PC-3 (cell line): ENCODE measurements at regions of chr3 and their contacts with region 1.

Region 1: DNA sequence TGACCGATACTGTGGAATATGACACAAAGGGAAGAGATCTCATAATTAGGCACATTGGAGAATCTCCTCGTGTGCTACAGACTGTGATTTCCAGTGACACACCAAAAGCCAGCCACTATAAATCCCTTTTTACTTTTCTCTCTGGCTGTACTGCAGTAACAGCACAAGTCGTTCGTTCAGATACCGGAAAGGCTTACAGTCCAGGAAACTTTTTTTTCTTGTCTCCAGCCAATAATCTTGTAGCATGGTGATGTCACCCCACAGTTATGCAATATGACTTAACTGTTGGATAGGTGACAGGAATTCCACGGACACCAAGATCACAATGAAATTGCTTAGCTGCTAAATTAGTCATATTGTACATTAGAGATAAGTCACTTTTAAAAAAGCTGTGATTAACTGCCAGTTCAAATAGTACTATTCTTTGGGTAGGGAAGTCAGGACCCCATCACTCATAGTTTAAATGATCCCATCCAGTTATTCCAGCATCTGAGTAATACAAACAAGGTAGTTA is 36.3 kb upstream of the TSC22D2 start:
- DNase-seq: peak; percentile 100
- ATAC-seq: peak; percentile 69
- H3K4me3 ChIP-seq: peak overlapping the region; percentile 63
- H3K27ac ChIP-seq: peak overlapping the region; percentile 84
- H3K4me1 ChIP-seq: peaks cover 49% of the 10 kb centered on the region
- H3K27me3 ChIP-seq: no peaks in the 10 kb centered on the region
- CTCF ChIP-seq: no peak

Region 2: DNA sequence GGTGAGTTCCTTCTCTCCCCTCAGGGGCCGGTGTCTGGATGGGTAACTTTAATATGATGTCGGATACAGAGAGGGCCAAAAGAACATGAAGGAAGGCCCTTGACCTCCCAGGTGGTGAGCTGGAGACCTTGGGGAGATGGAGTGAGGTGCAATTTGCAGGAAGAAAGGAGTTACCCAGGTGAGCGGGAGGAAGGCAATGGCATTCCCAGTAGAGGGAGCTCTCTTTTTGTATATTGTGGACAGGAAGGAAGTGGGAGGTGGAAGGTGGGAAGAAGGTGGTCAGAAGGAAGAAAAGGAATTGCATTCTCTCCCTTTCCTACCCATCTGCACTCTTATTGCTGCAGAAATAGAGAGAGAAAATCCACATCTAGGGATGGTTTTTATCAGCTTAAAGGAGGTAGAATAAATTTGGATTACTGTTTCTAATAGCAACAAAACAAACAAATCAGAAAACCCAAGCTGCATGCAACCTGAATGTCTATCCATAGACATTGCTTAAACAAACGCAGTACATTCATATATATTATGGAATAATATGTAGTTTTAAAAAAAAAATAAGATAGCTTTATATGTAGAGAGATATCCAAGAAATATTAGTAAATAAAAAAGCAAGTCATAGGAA is 132.7 kb before region 1 on chr3:
- CTCF ChIA-PET with region 1: no interaction called
- POLR2A ChIA-PET with region 1: no interaction called
- intact Hi-C with region 1: loop called (anchors 5 kb)
- DNase-seq: peak; percentile 77
- ATAC-seq: peak; percentile 40
- H3K4me3 ChIP-seq: peak overlapping the region; percentile 61
- H3K27ac ChIP-seq: peak overlapping the region; percentile 95
- H3K4me1 ChIP-seq: peaks cover 46% of the 10 kb centered on the region
- H3K27me3 ChIP-seq: no peaks in the 10 kb centered on the region
- CTCF ChIP-seq: peak; percentile 96

Region 3: DNA sequence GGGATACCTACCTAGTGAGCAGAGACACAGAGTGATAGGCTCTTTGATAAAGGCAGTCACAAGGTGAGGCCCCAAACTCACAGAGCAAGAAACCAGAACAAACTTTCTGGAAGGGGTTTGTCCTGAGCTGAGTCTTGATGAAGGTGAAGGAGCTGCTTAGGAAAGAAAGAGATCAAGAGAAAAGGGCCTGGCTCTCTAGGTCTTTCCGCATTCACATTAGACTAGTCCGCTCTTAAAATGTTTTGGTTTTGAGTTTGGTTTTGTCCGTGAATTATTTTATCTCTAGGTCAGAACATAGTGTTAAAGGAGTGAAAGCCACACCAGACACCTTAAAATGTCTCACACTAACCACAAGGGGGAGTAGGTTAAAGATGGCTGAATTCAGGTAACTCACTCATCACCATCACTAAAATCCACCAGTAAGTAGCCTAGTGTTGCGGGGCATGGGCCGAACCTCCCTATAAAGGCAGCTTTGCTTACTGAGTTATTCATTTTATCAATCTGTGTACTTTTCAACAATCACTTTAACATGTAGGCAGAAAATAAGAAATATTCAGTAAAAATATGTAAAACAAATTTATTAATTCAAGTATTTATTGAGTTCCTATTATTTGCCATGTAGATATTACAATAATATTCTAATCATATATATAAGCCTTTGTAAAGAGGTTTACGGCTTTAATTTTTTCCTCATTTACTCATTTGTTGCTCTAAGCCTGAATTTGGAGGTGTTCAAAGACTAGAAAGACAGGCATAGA is 85.2 kb before region 1 on chr3:
- CTCF ChIA-PET with region 1: no interaction called
- POLR2A ChIA-PET with region 1: no interaction called
- intact Hi-C with region 1: loop called (anchors 2 kb)
- DNase-seq: peak; percentile 80
- ATAC-seq: peak; percentile 98
- H3K4me3 ChIP-seq: peak overlapping the region; percentile 29
- H3K27ac ChIP-seq: no peak overlapping the region
- H3K4me1 ChIP-seq: peaks cover 7% of the 10 kb centered on the region
- H3K27me3 ChIP-seq: no peaks in the 10 kb centered on the region
- CTCF ChIP-seq: peak; percentile 87

Region 4: DNA sequence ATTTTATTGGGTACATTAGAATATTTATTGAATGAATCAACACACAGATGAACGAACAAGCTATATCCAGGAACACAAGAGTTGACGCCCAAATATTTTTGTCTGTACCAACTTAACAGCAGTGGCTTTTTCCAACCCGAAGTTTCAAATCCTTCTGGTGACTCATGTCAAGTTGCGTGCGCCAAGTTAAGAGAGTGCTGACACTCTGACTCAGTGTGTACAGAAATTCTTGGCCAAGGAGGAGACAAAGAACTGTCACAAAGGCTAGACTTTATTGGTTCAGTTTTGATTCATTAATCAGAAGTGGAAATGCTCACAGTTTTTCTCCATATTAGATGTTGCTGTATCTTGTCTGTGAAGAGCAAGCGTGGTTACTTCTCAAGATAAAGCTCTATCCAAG is 23.3 kb before region 1 on chr3:
- CTCF ChIA-PET with region 1: no interaction called
- POLR2A ChIA-PET with region 1: interaction called, 3 read pairs
- intact Hi-C with region 1: loop called (anchors 1 kb)
- DNase-seq: peak; percentile 96
- ATAC-seq: peak; percentile 78
- H3K4me3 ChIP-seq: peak overlapping the region; percentile 53
- H3K27ac ChIP-seq: peak overlapping the region; percentile 83
- H3K4me1 ChIP-seq: peaks cover 72% of the 10 kb centered on the region
- H3K27me3 ChIP-seq: no peaks in the 10 kb centered on the region
- CTCF ChIP-seq: no peak

Region 5: GRCh38 chr3:150582620-150583019 is 210.8 kb after region 1 on chr3:
- CTCF ChIA-PET with region 1: no interaction called
- POLR2A ChIA-PET with region 1: no interaction called
- intact Hi-C with region 1: no loop called
- DNase-seq: no peak
- ATAC-seq: no peak
- H3K4me3 ChIP-seq: no peak overlapping the region
- H3K27ac ChIP-seq: no peak overlapping the region
- H3K4me1 ChIP-seq: no peaks in the 10 kb centered on the region
- H3K27me3 ChIP-seq: no peaks in the 10 kb centered on the region
- CTCF ChIP-seq: no peak

Region 6: GRCh38 chr3:151197981-151198767 is 826.4 kb after region 1 on chr3:
- CTCF ChIA-PET with region 1: no interaction called
- POLR2A ChIA-PET with region 1: no interaction called
- intact Hi-C with region 1: no loop called
- DNase-seq: no peak
- ATAC-seq: no peak
- H3K4me3 ChIP-seq: no peak overlapping the region
- H3K27ac ChIP-seq: no peak overlapping the region
- H3K4me1 ChIP-seq: no peaks in the 10 kb centered on the region
- H3K27me3 ChIP-seq: no peaks in the 10 kb centered on the region
- CTCF ChIP-seq: no peak